Panc1 (cell line): ENCODE measurements at regions of chr3 and their contacts with region 1.

Region 1: GRCh38 chr3:65785065-65785645 is 253.6 kb downstream of the MAGI1 start:
- DNase-seq: peak; percentile 12
- ATAC-seq: no peak
- H3K4me3 ChIP-seq: no peak overlapping the region
- H3K27ac ChIP-seq: no peak overlapping the region
- H3K4me1 ChIP-seq: no peaks in the 10 kb centered on the region
- H3K27me3 ChIP-seq: no peaks in the 10 kb centered on the region
- CTCF ChIP-seq: peak; percentile 67; the same call in 1 of the 2 replicates

Region 2: GRCh38 chr3:66138336-66139313 is 353.5 kb after region 1 on chr3:
- CTCF ChIA-PET with region 1: no interaction called
- POLR2A ChIA-PET with region 1: no interaction called
- in situ Hi-C with region 1: no loop called
- intact Hi-C with region 1: loop called (anchors 1 kb)
- DNase-seq: no peak
- ATAC-seq: peak; percentile 70; the same call in 1 of the 2 replicates
- H3K4me3 ChIP-seq: no peak overlapping the region
- H3K27ac ChIP-seq: no peak overlapping the region
- H3K4me1 ChIP-seq: no peaks in the 10 kb centered on the region
- H3K27me3 ChIP-seq: no peaks in the 10 kb centered on the region
- CTCF ChIP-seq: peak; percentile 74